Dorsolateral prefrontal cortex (tissue), 120 donors: ENCODE measurements at regions of chr16 and their contacts with region 1.

Region 1: DNA sequence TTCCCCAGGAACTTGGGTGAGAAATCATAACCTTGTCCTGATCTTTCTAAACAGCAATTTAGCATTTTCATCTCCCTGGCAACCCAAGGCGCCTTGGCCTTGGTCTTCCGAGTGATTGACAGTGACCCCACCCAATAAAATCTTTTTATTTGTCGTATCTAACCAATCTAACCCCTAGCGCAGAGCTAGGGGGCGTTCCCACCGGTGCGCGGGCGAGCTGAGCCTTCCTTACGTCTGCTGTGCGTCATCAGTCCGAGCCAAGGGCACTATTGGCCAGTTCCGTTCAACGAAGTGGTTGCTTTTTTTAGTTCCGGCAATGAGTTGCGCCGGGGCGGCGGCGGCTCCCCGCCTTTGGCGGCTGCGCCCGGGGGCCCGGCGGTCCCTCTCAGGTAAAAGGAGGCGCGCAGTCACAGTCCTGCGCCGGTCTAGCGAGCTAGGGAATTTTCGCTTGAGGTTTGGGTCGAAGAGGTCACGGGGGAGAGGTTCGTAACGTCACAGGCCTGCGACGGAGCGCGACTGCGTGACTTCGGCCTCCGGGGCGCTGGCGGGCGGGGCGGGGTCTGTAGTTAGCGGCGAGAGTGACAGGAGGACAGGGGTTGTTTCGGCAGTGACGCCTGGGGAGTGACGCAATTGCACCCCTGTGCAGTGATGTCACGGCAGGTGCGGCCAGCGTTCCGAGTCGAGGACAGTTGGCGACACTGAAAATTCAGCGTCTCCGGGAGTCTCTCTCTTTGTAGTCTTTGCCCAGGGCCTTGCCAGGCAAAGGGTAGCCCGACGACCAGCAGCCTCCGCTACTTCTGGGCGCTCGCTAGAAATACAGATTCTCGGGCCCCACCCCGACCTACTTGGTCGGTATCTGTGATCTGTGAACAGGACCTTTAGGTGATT is at the start of gene COQ7:
- DNase-seq: peak; percentile 95 to 99 (median 98)
- H3K4me3 ChIP-seq: peak within 1 kb of the TSS; percentile 64 to 98 (median 85)
- H3K27ac ChIP-seq: peak within 1 kb of the TSS; percentile 94 to 100 (median 99)
- H3K27me3 ChIP-seq: no peaks in the 10 kb centered on the region
- CTCF ChIP-seq: peak in 37 of 56 donors; percentile 1 to 67 (median 32)
- total RNA-seq, gene COQ7: 16.8 to 38.7 (median 28.3) TPM

Region 2: GRCh38 chr16:18983565-18984424 is 83.8 kb before region 1 on chr16 and contains the start of gene TMC7:
- intact Hi-C with region 1: loop called (anchors 1 to 5 kb)
- DNase-seq: peak; percentile 91 to 95 (median 93)
- H3K4me3 ChIP-seq: peak within 1 kb of the TSS; percentile 55 to 95 (median 84)
- H3K27ac ChIP-seq: peak within 1 kb of the TSS; percentile 15 to 98 (median 94)
- H3K27me3 ChIP-seq: no peaks in the 10 kb centered on the region
- CTCF ChIP-seq: peak; percentile 47 to 99 (median 94)
- total RNA-seq, gene TMC7: 4.6 to 56.9 (median 13.3) TPM

Region 3: GRCh38 chr16:19005561-19006445 is 61.8 kb before region 1 on chr16:
- intact Hi-C with region 1: loop called in 1 of 2 experiments (anchors 5 kb)
- DNase-seq: peak; percentile 34 to 98 (median 92)
- H3K4me3 ChIP-seq: peak overlapping the region in 7 of 59 donors; percentile 0 to 30 (median 18)
- H3K27ac ChIP-seq: peak overlapping the region; percentile 44 to 100 (median 97)
- H3K27me3 ChIP-seq: no peaks in the 10 kb centered on the region
- CTCF ChIP-seq: peak in 4 of 56 donors; percentile 6 to 19 (median 11)

Region 4: GRCh38 chr16:19044769-19045168 is 22.8 kb before region 1 on chr16:
- intact Hi-C with region 1: no loop called
- DNase-seq: no peak
- H3K4me3 ChIP-seq: no peak overlapping the region
- H3K27ac ChIP-seq: no peak overlapping the region
- H3K27me3 ChIP-seq: no peaks in the 10 kb centered on the region
- CTCF ChIP-seq: no peak